Heart left ventricle (tissue), 16 donors: ENCODE measurements at regions of chr11 and their contacts with region 1.

Region 1: DNA sequence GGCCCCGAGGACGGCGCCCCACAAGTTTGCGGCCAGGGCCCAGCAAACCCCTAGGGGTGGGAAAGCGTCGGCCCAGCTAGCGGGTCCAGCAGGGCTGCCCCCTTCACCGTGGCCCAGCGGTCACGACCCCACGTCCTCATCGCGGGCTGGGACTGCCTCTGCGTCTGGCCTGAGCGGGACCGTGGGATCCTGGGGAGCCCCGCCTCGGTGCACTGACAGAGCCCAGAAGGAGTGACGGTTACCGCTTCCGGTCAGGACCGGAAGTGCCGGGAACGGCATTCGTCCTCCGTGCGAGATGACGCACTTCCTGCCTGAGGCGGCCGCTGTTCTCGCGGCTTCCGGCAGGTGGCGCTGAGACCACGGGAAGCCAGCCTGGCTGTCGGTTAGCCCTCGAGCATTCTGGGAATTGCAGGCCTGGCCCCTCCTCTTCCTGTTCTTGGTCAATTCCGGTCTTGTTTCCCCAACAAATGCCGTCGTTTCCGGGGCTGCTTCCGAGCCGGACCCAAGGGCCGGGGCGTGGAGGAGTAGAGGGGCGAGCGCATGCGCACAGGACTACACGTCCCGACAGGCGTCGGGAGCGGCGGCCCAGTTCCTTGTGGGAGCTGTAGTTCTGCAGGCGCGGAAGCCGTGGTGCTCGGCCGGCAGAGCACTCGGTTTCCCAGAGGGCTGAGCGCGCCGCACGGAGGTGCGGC is at the start of gene TSSC4:
- DNase-seq: peak; percentile 100
- ATAC-seq: peak; percentile 90 to 95 (median 92)
- H3K4me3 ChIP-seq: peak within 1 kb of the TSS; percentile 69 to 100 (median 86)
- H3K27ac ChIP-seq: peak within 1 kb of the TSS; percentile 76 to 100 (median 98)
- H3K4me1 ChIP-seq: peaks cover 0 to 27% (median 25%) of the 10 kb centered on the region in 12 donors
- H3K27me3 ChIP-seq: no peaks in the 10 kb centered on the region
- CTCF ChIP-seq: peak; percentile 95 to 100 (median 98)
- POLR2A ChIP-seq: peak in 1 of 2 donors; percentile 72
- total RNA-seq, gene TSSC4: 23.4 to 45.2 (median 37.2) TPM

Region 2: DNA sequence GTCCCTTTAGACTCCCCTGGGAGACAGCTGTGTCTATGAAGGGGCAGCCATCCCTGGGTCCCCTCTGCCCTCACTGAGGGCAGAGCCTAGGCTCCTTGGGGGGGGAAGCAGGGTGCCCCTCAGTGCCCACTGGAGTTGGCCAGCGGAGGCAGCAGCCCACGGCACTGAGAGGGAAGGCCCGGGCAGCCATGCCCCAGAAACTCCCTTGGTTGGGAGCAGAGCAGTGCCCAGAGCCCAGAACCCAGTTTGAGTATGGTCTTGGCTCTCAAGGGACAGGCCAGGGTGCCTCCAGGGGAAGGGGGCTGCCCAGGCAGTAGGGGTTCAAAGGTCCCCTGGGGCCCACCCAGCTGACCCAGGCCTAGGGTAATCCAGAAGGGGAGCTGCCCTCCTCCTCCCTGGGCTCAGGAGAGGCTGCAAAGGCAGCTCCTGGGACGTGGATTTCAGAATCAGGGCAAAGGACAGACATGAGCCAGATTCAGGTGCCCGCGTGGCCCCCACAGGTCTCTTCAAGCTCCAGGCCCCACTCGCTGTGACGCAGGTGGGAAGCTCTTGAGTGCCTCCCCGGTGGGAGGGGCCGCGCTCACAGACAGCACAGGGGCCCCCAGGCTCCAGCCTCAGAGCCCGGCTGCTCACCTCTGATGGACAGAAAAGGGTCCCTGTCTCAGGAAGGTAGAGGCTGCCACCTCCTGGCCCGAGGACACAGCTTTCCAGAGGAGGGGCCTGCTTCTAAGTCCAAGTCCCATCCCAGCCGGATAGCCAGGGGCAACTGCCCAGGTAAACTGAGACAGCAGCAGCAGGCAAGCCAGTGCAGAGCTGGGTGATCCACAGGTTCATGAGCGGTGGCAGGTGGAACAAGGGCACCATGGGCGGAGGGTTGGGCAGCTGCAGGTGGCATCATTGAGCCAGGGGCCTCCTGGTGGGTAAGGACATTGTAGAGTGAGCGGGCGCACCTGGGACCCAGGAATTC is 101.1 kb before region 1 on chr11:
- intact Hi-C with region 1: loop called in 1 of 10 experiments (anchors 5 kb)
- DNase-seq: peak in 2 of 5 donors; percentile 21 to 62
- ATAC-seq: no peak
- H3K4me3 ChIP-seq: no peak overlapping the region
- H3K27ac ChIP-seq: peak overlapping the region in 3 of 12 donors; percentile 3 to 23 (median 10)
- H3K4me1 ChIP-seq: peaks cover 0 to 49% (median 12%) of the 10 kb centered on the region in 12 donors
- H3K27me3 ChIP-seq: no peaks in the 10 kb centered on the region
- CTCF ChIP-seq: peak in 10 of 12 donors; percentile 12 to 42 (median 26)
- POLR2A ChIP-seq: no peak

Region 3: DNA sequence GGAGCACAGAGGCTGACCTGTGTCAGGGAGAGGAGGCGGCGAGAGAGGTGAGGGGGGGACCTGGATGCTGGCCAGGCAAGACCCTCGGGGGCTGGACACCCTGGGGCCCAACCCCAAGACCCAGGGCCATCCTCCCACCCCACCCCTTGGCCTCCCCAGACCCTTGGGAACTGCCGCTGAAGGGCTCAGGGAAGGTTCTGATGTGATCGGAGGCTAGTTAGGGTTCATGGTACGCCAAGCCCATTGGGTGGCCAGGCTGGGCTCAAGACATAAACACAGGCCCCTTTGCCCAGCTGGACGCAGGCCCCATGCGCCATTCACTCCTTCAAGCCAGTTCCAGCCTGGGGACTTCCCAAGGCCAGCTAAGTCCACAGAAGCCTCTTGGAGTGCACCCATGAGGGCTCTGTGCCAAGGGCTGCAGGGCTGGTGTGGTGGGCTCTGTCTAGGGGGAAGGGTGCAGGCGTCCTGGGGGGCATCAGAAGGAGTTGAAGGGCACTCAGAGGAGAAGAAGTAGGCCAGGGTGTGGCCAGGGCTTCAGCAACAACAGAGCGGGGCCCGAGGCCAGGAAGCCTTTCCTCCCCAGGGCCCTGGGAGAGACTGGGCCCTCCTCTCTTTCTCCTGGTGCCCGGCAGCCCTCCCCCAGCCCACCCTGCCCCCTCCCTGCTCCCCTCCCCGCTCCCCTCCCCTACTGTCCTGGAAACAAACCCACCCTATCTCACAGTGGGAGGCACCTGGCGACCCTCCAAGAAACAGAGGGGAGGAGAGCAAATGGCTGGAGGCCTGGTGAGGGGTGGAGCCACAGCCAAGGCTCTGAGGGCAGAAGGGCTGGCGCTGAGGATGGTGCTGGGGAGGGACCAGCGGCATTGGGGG is 85.5 kb before region 1 on chr11:
- intact Hi-C with region 1: loop called in 7 of 10 experiments (anchors 2 to 5 kb)
- DNase-seq: peak; percentile 92 to 97 (median 94)
- ATAC-seq: peak; percentile 86 to 91 (median 89)
- H3K4me3 ChIP-seq: peak overlapping the region in 9 of 12 donors; percentile 14 to 34 (median 26)
- H3K27ac ChIP-seq: peak overlapping the region; percentile 69 to 90 (median 86)
- H3K4me1 ChIP-seq: peaks cover 0 to 41% (median 26%) of the 10 kb centered on the region in 12 donors
- H3K27me3 ChIP-seq: no peaks in the 10 kb centered on the region
- CTCF ChIP-seq: no peak
- POLR2A ChIP-seq: no peak

Region 4: GRCh38 chr11:2382936-2383851 is 17.0 kb before region 1 on chr11:
- intact Hi-C with region 1: loop called in 3 of 10 experiments (anchors 1 to 2 kb)
- DNase-seq: peak; percentile 86 to 92 (median 89)
- ATAC-seq: peak; percentile 43 to 78 (median 54)
- H3K4me3 ChIP-seq: peak overlapping the region in 6 of 12 donors; percentile 8 to 30 (median 18)
- H3K27ac ChIP-seq: peak overlapping the region; percentile 46 to 100 (median 99)
- H3K4me1 ChIP-seq: peaks cover 38 to 100% (median 87%) of the 10 kb centered on the region in 12 donors
- H3K27me3 ChIP-seq: no peaks in the 10 kb centered on the region
- CTCF ChIP-seq: peak in 5 of 12 donors; percentile 7 to 44 (median 25)
- POLR2A ChIP-seq: no peak

Region 5: GRCh38 chr11:3353066-3353465 is 952.9 kb after region 1 on chr11:
- intact Hi-C with region 1: no loop called
- DNase-seq: no peak
- ATAC-seq: no peak
- H3K4me3 ChIP-seq: no peak overlapping the region
- H3K27ac ChIP-seq: no peak overlapping the region
- H3K4me1 ChIP-seq: no peaks in the 10 kb centered on the region
- H3K27me3 ChIP-seq: no peaks in the 10 kb centered on the region
- CTCF ChIP-seq: no peak
- POLR2A ChIP-seq: no peak